ENCODE measurements at regions of chr10 and their contacts with region 1.

Region 1: GRCh38 chr10:26410404-26410803 is 27.7 kb upstream of the APBB1IP start:
- DNase-seq: no peak
- ATAC-seq: no peak
- H3K4me3 ChIP-seq: no peak overlapping the region
- H3K27ac ChIP-seq: peak overlapping the region; percentile 12 to 85; a peak in 3 of 6 replicates
- H3K4me1 ChIP-seq: peaks cover 37% of the 10 kb centered on the region
- CTCF ChIP-seq: no peak
- EP300 ChIP-seq: no peak
- POLR2A ChIP-seq: no peak
- RAD21 ChIP-seq: no peak

Region 2: GRCh38 chr10:26372513-26373354 is 37.7 kb before region 1 on chr10:
- CTCF ChIA-PET with region 1: no interaction called
- POLR2A ChIA-PET with region 1: no interaction called
- DNase-seq: no peak
- ATAC-seq: no peak
- H3K4me3 ChIP-seq: no peak overlapping the region
- H3K27ac ChIP-seq: peak overlapping the region in 1 of 2 experiments; percentile 63; a peak in 2 of 6 replicates
- H3K4me1 ChIP-seq: 0 out of 3 replicates have a peak, but pooled peaks cover 1% of the 10 kb centered on the region
- CTCF ChIP-seq: no peak
- EP300 ChIP-seq: no peak
- POLR2A ChIP-seq: no peak
- RAD21 ChIP-seq: no peak

Region 3: DNA sequence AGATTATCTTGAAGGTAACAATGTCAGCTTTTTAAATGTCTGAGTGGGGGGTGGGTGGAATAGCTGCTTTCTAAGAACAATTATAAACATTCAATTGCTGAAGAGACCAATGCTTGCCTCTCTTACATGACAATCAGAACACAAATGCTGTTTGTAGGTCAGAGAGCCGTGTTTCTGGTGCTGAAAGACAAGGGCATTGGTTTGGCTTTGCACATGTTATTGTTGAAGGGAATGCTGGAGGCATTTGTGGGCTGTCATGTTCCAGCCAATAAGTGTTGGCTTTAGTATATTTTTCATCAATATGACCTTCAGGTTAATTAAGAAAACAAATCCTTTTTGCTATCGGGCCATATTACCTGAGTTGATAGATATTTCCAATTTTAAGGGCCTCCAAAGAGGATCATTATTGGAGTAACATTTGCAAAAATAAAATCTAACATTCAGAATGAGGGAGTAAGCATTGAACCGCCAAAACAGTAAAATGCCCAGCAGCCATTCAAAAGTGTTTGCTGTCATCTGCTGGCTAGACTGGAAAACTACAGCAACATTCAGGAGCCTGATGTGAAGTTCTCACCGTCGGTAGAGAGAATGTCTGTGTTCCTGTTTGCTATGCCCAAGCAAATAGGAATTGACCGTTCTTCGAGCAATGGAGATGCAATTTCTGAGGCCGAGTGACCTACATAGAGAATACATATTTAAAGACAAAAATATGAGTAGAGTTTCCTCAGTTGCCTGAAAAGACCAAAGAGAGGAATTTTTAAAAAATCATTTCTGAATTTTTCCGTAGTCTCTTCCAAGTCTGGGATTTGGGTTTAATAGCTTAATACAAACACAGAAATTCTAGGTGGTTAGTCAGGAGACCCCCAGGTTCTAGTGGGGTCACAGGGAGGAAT is 146.6 kb after region 1 on chr10:
- CTCF ChIA-PET with region 1: interaction called, 10 read pairs
- POLR2A ChIA-PET with region 1: no interaction called
- DNase-seq: peak; percentile 73 to 75
- ATAC-seq: peak; percentile 74 to 83; a peak in 5 of 6 replicates
- H3K4me3 ChIP-seq: no peak overlapping the region
- H3K27ac ChIP-seq: peak overlapping the region; percentile 77 to 81
- H3K4me1 ChIP-seq: peaks cover 30% of the 10 kb centered on the region
- CTCF ChIP-seq: peak; percentile 98
- EP300 ChIP-seq: no peak
- POLR2A ChIP-seq: no peak
- RAD21 ChIP-seq: peak; percentile 99